Aorta (tissue), 5 donors: ENCODE measurements at regions of chr17 and their contacts with region 1.

Region 1: GRCh38 chr17:48745381-48746275 is 17.1 kb upstream of the HOXB13 start:
- DNase-seq: peak in 1 of 2 donors; percentile 22
- ATAC-seq: no peak
- H3K4me3 ChIP-seq: no peak overlapping the region
- H3K27ac ChIP-seq: no peak overlapping the region
- H3K4me1 ChIP-seq: no peaks in the 10 kb centered on the region
- H3K27me3 ChIP-seq: peaks cover 0 to 4% of the 10 kb centered on the region in 2 donors

Region 2: DNA sequence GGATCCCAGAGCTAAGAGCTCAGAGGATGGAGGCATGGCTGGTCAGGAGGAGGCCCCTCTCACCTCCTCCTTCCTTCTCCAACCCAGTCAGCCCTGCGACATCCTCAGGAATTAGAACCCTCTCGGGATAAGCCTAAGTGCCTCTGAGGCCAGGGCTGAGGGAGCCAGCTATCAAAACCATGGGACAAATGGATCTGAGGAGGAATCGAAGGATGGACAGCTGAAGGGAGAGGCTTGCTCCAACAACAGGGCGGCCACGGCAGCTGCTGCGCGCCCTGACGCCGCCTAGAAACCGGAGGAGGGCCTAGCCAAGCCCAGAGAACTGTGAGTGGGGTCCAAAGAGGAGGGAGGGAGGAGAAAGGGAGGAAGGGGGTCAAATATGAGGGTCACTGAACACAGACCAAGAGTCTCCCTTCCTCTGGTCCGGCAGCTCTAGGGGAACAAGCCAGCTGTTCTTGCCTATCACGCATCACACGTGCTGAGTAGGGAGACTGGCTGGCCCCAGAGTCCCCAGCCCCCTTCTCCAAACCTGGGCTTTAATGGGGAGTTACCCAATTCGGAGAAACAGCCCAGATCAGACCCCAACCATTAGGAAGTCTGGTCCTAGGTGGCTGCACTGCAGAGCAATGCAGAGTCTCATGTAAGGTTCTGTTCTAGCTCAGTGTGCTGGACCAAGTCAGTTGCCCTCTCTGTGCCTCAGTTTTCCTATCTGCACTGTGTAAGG is 11.1 kb before region 1 on chr17:
- intact Hi-C with region 1: loop called in 1 of 2 experiments (anchors 1 kb)
- DNase-seq: peak in 1 of 2 donors; percentile 36
- ATAC-seq: peak; percentile 36
- H3K4me3 ChIP-seq: no peak overlapping the region
- H3K27ac ChIP-seq: no peak overlapping the region
- H3K4me1 ChIP-seq: no peaks in the 10 kb centered on the region
- H3K27me3 ChIP-seq: peaks cover 0 to 1% of the 10 kb centered on the region in 2 donors